SK-N-SH (cell line): ENCODE measurements at regions of chr19 and their contacts with region 1.

Region 1: GRCh38 chr19:55467236-55468053 is 2.9 kb upstream of the C19orf85 start:
- DNase-seq: peak; percentile 90
- H3K4me3 ChIP-seq: peak overlapping the region in 1 of 2 experiments; percentile 33; a peak in 1 of 4 replicates
- H3K27ac ChIP-seq: no peak overlapping the region
- H3K4me1 ChIP-seq: peaks cover 0 to 3% of the 10 kb centered on the region in 2 experiments; a peak in 2 of 4 replicates
- H3K27me3 ChIP-seq: no peaks in the 10 kb centered on the region
- CTCF ChIP-seq: peak; percentile 96
- EP300 ChIP-seq: no peak
- RAD21 ChIP-seq: peak; percentile 63

Region 2: GRCh38 chr19:55166530-55167268 is 300.7 kb before region 1 on chr19 and contains the start of gene DNAAF3:
- CTCF ChIA-PET with region 1: interaction called, 12 read pairs
- POLR2A ChIA-PET with region 1: no interaction called
- DNase-seq: peak; percentile 99
- H3K4me3 ChIP-seq: peak within 1 kb of the TSS; percentile 55 to 86
- H3K27ac ChIP-seq: peak within 1 kb of the TSS in 1 of 2 experiments; percentile 60; a peak in 1 of 4 replicates
- H3K4me1 ChIP-seq: peaks cover 0 to 6% of the 10 kb centered on the region in 2 experiments; a peak in 1 of 4 replicates
- H3K27me3 ChIP-seq: peaks cover 47% of the 10 kb centered on the region
- CTCF ChIP-seq: no peak
- EP300 ChIP-seq: no peak; a peak in 1 of 4 replicates
- RAD21 ChIP-seq: no peak
- polyA plus RNA-seq, gene DNAAF3: 2.4 and 2.5 TPM in 2 replicates

Region 3: GRCh38 chr19:55452749-55453346 is 14.6 kb before region 1 on chr19:
- CTCF ChIA-PET with region 1: interaction called, 26 read pairs
- POLR2A ChIA-PET with region 1: no interaction called
- DNase-seq: peak; percentile 98
- H3K4me3 ChIP-seq: peak overlapping the region in 1 of 2 experiments; percentile 36; a peak in 2 of 4 replicates
- H3K27ac ChIP-seq: no peak overlapping the region
- H3K4me1 ChIP-seq: peaks cover 0 to 13% of the 10 kb centered on the region in 2 experiments; a peak in 2 of 4 replicates
- H3K27me3 ChIP-seq: peaks cover 11% of the 10 kb centered on the region
- CTCF ChIP-seq: no peak; the same call in 1 of the 2 replicates
- EP300 ChIP-seq: no peak
- RAD21 ChIP-seq: no peak

Region 4: DNA sequence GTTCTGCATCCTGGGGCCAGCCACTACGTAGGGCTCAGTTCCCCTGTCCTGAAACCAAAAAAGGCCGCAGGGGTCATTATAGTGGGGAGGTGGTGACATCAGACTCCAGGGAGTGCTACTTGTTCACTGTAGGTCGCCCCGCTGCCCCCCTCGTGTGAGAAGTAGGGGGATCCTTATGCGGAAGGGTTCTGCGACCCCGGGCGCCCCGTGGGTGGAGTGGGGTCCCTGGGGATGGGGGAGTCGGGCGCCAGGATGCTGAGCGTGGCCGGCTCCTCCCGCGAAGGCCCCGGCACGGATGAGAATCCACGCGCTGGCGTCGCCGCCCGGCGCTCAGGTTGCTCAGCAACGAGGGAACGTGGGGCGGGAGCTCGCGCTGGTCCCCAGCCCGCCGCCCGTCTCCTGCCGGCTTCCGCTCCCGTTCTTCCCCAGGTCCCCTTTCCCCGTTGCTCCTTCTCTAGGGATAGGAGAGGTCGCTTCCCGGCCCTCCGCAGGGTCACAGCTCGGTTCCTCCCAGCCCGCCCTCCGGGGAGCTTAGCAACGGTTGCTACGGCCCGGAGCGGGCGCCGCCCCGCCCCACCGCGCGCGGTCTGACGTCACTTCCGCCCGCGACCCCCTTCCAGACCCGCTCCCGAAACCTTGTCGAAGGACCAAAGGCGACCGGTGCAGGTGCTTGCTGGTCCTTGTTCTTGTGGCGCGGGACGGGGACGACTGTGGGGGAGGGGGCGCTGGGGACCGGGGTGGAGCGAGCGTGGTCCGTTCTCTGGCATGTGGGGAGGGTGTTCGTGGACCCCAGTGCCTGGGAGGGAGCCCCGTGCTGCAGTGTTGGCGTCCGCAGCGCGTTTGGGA is 17.4 kb after region 1 on chr19 and contains the start of gene NAT14:
- CTCF ChIA-PET with region 1: interaction called, 48 read pairs
- POLR2A ChIA-PET with region 1: interaction called, 3 read pairs
- DNase-seq: peak; percentile 97
- H3K4me3 ChIP-seq: peak within 1 kb of the TSS; percentile 69 to 80
- H3K27ac ChIP-seq: peak within 1 kb of the TSS; percentile 95 to 97
- H3K4me1 ChIP-seq: peaks cover 30 to 44% of the 10 kb centered on the region in 2 experiments; a peak in 3 of 4 replicates
- H3K27me3 ChIP-seq: no peaks in the 10 kb centered on the region
- CTCF ChIP-seq: no peak
- EP300 ChIP-seq: no peak
- RAD21 ChIP-seq: no peak
- polyA plus RNA-seq, gene NAT14: 84.4 and 89.9 TPM in 2 replicates

Region 5: GRCh38 chr19:55494172-55494761 is 26.8 kb after region 1 on chr19:
- CTCF ChIA-PET with region 1: interaction called, 31 read pairs
- POLR2A ChIA-PET with region 1: no interaction called
- DNase-seq: no peak
- H3K4me3 ChIP-seq: no peak overlapping the region
- H3K27ac ChIP-seq: no peak overlapping the region
- H3K4me1 ChIP-seq: peaks cover 0 to 35% of the 10 kb centered on the region in 2 experiments; a peak in 1 of 4 replicates
- H3K27me3 ChIP-seq: no peaks in the 10 kb centered on the region
- CTCF ChIP-seq: no peak
- EP300 ChIP-seq: no peak
- RAD21 ChIP-seq: no peak

Region 6: GRCh38 chr19:55528030-55528803 is 60.8 kb after region 1 on chr19:
- CTCF ChIA-PET with region 1: no interaction called
- POLR2A ChIA-PET with region 1: no interaction called
- DNase-seq: peak; percentile 90
- H3K4me3 ChIP-seq: no peak overlapping the region
- H3K27ac ChIP-seq: peak overlapping the region in 1 of 2 experiments; percentile 76; a peak in 2 of 4 replicates
- H3K4me1 ChIP-seq: peaks cover 0 to 31% of the 10 kb centered on the region in 2 experiments; a peak in 1 of 4 replicates
- H3K27me3 ChIP-seq: no peaks in the 10 kb centered on the region
- CTCF ChIP-seq: no peak
- EP300 ChIP-seq: 0 out of 4 replicates have a peak, but pooled peaks of 1 of the 2 experiments have one; percentile 25
- RAD21 ChIP-seq: peak; percentile 29; the same call in 1 of the 2 replicates

Region 7: GRCh38 chr19:55632463-55632834 is 165.0 kb after region 1 on chr19:
- CTCF ChIA-PET with region 1: interaction called, 10 read pairs
- POLR2A ChIA-PET with region 1: no interaction called
- DNase-seq: peak; percentile 62
- H3K4me3 ChIP-seq: peak overlapping the region in 1 of 2 experiments; percentile 30; a peak in 1 of 4 replicates
- H3K27ac ChIP-seq: peak overlapping the region in 1 of 2 experiments; percentile 26; a peak in 1 of 4 replicates
- H3K4me1 ChIP-seq: peaks cover 0 to 14% of the 10 kb centered on the region in 2 experiments; a peak in 1 of 4 replicates
- H3K27me3 ChIP-seq: no peaks in the 10 kb centered on the region
- CTCF ChIP-seq: peak; percentile 83
- EP300 ChIP-seq: no peak
- RAD21 ChIP-seq: peak; percentile 82